ENCODE measurements at regions of chr14 and their contacts with region 1.

Region 1: GRCh38 chr14:32076278-32077080 is 625 bp upstream of the ARHGAP5 start:
- DNase-seq: peak; percentile 97
- ATAC-seq: peak; percentile 92

Region 2: DNA sequence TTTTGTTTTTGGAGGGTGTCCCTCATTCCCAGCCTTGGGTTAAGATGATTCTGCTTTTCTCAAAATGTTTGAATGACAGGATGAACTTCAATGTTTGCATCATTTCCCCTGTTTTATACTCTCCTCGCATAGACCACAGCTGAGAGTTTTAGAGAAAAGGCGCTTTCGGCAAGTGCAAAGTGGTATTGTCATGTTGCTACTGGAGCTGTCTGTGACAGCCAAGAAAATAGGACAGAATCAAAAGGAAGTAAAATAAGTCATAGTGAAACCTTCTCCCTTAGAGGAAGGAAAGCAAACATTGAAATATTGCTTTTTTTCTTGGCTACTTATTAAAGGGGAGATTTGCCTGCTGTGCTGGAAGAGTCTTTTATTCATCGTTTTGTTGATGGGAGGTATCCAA is 32.9 kb before region 1 on chr14:
- intact Hi-C with region 1: no loop called
- DNase-seq: no peak
- ATAC-seq: peak; percentile 48

Region 3: DNA sequence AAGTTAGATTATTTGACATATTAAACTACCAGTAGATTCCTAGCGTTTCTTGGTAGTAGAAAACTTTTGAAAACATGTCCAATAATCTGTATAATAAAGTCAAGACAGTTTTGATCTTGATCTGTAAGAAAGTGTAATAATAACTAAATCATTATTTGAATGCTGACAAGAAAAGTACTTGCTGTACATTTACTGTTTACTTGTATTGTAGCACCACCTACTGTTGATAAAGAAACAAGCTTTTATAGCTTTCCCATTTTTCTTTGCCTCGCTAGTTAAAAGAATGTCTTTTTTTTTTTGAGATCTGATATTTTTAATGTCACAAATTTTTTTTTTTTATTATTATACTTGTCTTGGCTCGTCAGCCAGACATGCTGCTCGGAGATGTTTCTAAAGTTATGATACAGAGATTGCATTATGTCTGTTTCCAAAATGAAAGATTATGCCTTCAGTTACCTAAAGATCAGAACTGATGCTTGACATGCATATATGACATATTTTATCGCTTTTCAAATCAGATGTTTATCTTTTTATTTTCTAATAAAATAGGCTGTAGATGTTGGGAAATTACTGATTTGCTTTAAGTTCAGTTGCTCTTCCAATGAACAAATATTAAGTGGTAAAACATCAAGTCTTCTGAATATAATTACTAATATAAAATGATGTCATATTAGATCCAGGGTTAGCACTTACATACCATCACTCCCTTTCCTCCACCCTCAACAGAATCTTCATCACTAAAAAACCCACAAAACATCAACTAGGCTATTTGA is 393.1 kb after region 1 on chr14:
- intact Hi-C with region 1: loop called (anchors 10 kb)
- DNase-seq: no peak
- ATAC-seq: peak; percentile 58